Heart left ventricle (tissue), 16 donors: ENCODE measurements at regions of chr2 and their contacts with region 1.

Region 1: GRCh38 chr2:218710687-218711549 is at the start of gene TTLL4:
- DNase-seq: peak; percentile 98 to 100 (median 98)
- ATAC-seq: peak; percentile 96 to 99 (median 98)
- H3K4me3 ChIP-seq: peak within 1 kb of the TSS; percentile 61 to 93 (median 83)
- H3K27ac ChIP-seq: peak within 1 kb of the TSS; percentile 36 to 96 (median 90)
- H3K4me1 ChIP-seq: peaks cover 0 to 33% (median 8%) of the 10 kb centered on the region in 12 donors
- H3K27me3 ChIP-seq: no peaks in the 10 kb centered on the region
- CTCF ChIP-seq: peak; percentile 75 to 99 (median 88)
- POLR2A ChIP-seq: peak in 1 of 2 donors; percentile 70
- total RNA-seq, gene TTLL4: 5.3 to 14.0 (median 6.0) TPM

Region 2: DNA sequence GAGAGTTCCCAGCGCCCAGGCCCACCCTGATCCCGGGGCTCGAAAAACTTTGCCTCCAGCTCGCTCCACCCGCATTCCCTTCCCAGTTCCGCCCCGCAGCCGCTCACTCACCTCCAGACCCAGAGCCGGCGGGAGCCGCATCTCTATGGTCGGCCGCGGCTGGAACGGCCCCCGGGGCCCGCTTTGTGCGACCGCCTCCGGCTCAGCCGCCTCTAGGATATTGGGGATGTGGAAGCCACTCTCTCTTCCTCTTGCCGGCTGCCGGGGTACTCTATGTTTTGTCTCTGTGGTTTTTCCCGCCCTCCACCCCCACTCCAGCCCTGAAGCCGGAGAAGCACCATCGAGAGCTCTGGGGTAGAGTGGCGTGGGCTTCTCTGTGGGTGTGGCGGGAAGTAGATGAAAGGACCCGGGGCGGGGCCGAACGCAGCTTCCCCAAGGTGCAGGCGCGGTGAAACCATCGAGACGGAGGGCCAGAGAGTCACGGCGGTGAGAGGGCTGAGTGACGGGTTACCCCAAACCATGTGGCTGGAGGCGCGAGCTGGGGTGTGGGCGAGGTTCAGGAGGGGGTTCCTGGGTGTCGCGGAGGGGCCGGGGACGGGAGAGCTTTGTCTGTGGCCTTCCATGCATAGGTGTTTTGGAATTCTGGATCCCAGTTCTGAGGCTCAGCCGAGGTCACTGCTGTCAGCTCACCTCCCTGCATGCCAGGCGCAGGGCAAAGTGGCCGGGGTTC is 51.5 kb before region 1 on chr2 and contains the starts of genes BCS1L and ZNF142:
- intact Hi-C with region 1: loop called in 1 of 10 experiments (anchors 2 kb)
- DNase-seq: peak; percentile 92 to 95 (median 95)
- ATAC-seq: peak; percentile 89 to 98 (median 96)
- H3K4me3 ChIP-seq: peak within 1 kb of the TSS; percentile 60 to 96 (median 88)
- H3K27ac ChIP-seq: peak within 1 kb of the TSS; percentile 45 to 91 (median 82)
- H3K4me1 ChIP-seq: peaks cover 0 to 45% (median 25%) of the 10 kb centered on the region in 12 donors
- H3K27me3 ChIP-seq: no peaks in the 10 kb centered on the region
- CTCF ChIP-seq: no peak
- POLR2A ChIP-seq: peak in 1 of 2 donors; percentile 81
- total RNA-seq, gene BCS1L: 27.3 to 53.2 (median 43.7) TPM
- total RNA-seq, gene ZNF142: 18.1 to 46.0 (median 21.8) TPM

Region 3: GRCh38 chr2:218671654-218672566 is 39.0 kb before region 1 on chr2 and contains the starts of genes RNF25 and STK36:
- intact Hi-C with region 1: loop called in 1 of 10 experiments (anchors 2 kb)
- DNase-seq: peak; percentile 87 to 91 (median 89)
- ATAC-seq: peak; percentile 96 to 99 (median 98)
- H3K4me3 ChIP-seq: peak within 1 kb of the TSS; percentile 75 to 97 (median 90)
- H3K27ac ChIP-seq: peak within 1 kb of the TSS; percentile 14 to 87 (median 82)
- H3K4me1 ChIP-seq: peaks cover 0 to 21% (median 14%) of the 10 kb centered on the region in 12 donors
- H3K27me3 ChIP-seq: no peaks in the 10 kb centered on the region
- CTCF ChIP-seq: no peak
- POLR2A ChIP-seq: peak in 1 of 2 donors; percentile 78
- total RNA-seq, gene RNF25: 9.7 to 23.8 (median 15.0) TPM
- total RNA-seq, gene STK36: 4.7 to 16.2 (median 7.9) TPM

Region 4: DNA sequence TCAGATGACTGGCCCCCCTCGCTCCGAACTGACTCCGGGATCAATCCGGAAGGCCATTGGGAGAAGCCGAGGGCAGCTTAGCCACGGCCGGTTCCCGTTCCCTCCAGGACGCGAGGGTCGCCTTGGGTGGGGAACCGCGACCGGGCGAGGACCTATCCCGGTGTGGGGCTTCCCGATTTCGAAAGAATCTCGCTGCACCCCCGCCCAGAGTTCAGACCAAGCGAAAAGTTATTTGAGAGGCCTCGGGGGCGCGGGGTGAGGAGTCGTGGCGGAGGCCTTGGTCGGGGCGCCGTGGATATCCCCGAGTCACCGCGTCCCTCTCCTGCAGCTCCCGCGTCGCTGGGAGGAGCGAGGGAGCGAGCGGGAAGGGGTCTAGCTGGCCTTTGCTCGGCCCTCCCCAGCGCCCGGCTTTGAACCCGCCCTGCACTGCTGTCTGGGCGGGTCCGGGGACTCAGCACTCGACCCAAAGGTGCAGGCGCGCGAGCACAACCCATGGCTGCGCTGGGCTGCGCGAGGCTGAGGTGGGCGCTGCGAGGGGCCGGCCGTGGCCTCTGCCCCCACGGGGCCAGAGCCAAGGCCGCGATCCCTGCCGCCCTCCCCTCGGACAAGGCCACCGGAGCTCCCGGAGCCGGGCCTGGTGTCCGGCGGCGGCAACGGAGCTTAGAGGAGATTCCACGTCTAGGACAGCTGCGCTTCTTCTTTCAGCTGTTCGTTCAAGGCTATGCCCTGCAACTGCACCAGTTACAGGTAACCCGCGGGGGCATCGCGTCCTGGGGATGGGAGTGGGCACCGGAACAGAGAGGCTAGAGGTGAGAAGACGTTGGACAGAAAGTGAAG is 71.0 kb after region 1 on chr2 and contains the start of gene CYP27A1:
- intact Hi-C with region 1: loop called in 1 of 10 experiments (anchors 5 kb)
- DNase-seq: peak; percentile 46 to 75 (median 56)
- ATAC-seq: peak; percentile 81 to 95 (median 90)
- H3K4me3 ChIP-seq: peak within 1 kb of the TSS; percentile 58 to 88 (median 76)
- H3K27ac ChIP-seq: peak within 1 kb of the TSS; percentile 65 to 91 (median 78)
- H3K4me1 ChIP-seq: peaks cover 0 to 33% (median 6%) of the 10 kb centered on the region in 12 donors
- H3K27me3 ChIP-seq: peaks cover 0 to 13% (median 0%) of the 10 kb centered on the region in 9 donors
- CTCF ChIP-seq: no peak
- POLR2A ChIP-seq: peak in 1 of 2 donors; percentile 37
- total RNA-seq, gene CYP27A1: 3.3 to 43.8 (median 7.5) TPM

Region 5: GRCh38 chr2:218806346-218806978 is 95.5 kb after region 1 on chr2:
- intact Hi-C with region 1: loop called in 1 of 10 experiments (anchors 5 kb)
- DNase-seq: peak; percentile 52 to 82 (median 76)
- ATAC-seq: peak; percentile 76 to 99 (median 96)
- H3K4me3 ChIP-seq: peak overlapping the region in 3 of 12 donors; percentile 2 to 22 (median 7)
- H3K27ac ChIP-seq: peak overlapping the region in 11 of 12 donors; percentile 39 to 89 (median 74)
- H3K4me1 ChIP-seq: peaks cover 0 to 32% (median 7%) of the 10 kb centered on the region in 12 donors
- H3K27me3 ChIP-seq: no peaks in the 10 kb centered on the region
- CTCF ChIP-seq: no peak
- POLR2A ChIP-seq: no peak

Region 6: DNA sequence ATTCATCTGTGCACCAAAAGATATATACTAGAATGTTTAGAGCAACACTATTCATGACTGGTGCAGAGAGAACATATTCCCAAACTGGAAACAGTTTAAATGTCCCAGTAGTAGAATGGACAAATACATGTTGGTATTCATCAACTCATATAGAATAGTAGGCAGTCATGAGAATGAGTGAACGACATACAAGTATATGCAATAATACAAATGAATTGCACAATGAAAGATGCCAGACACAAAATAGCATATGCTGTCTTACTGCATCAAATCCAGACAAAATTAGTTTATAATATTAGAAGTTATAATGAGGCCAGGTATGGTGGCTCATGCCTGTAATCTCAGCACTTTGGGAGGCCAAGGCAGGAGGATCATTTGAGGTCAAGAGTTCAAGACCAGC is 129.0 kb after region 1 on chr2:
- intact Hi-C with region 1: loop called in 6 of 10 experiments (anchors 5 kb)
- DNase-seq: no peak
- ATAC-seq: no peak
- H3K4me3 ChIP-seq: no peak overlapping the region
- H3K27ac ChIP-seq: peak overlapping the region in 1 of 12 donors; percentile 28
- H3K4me1 ChIP-seq: peaks cover 0 to 16% (median 0%) of the 10 kb centered on the region in 12 donors
- H3K27me3 ChIP-seq: peaks cover 0 to 33% (median 0%) of the 10 kb centered on the region in 9 donors
- CTCF ChIP-seq: no peak
- POLR2A ChIP-seq: no peak

Region 7: GRCh38 chr2:218852911-218853667 is 142.2 kb after region 1 on chr2:
- intact Hi-C with region 1: loop called in 5 of 10 experiments (anchors 5 kb)
- DNase-seq: peak in 2 of 5 donors; percentile 36 to 53
- ATAC-seq: peak in 3 of 4 donors; percentile 48 to 70 (median 60)
- H3K4me3 ChIP-seq: no peak overlapping the region
- H3K27ac ChIP-seq: no peak overlapping the region
- H3K4me1 ChIP-seq: peaks cover 0 to 11% (median 0%) of the 10 kb centered on the region in 12 donors
- H3K27me3 ChIP-seq: peaks cover 0 to 78% (median 46%) of the 10 kb centered on the region in 9 donors
- CTCF ChIP-seq: peak; percentile 43 to 75 (median 63)
- POLR2A ChIP-seq: no peak